ENCODE measurements at regions of chr12 and their contacts with region 1.

Region 1: DNA sequence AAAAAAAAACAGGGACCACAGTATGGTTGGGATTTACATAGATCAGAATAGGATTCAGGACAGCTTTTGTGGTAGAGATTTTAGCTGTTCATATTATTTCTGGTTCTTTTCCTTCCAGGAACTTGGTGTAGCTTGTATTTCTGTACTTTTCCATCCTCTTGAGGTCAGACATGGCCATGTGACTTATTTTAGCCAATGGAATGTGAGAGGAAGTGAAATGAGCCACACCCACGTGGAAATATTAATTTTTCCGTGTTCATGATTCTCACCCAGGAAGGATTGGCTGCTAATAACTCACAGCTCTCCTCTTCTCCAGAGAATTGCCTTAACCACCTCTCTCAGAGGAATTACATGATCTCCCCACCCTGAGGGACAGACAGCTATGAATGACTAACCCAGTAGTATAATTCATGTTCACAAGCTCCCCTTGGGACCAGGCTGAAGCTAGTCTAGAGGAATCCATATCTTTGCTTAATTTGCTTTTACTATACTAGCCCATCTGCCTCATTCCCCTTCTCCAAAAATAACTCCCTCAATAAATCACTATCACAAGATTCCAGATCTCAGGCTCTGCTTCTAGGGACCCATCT is 340.4 kb downstream of the NUAK1 start:
- DNase-seq: no peak
- H3K4me3 Mint-ChIP-seq: no peak overlapping the region
- H3K27ac Mint-ChIP-seq: no peak overlapping the region
- H3K4me1 Mint-ChIP-seq: no peaks in the 10 kb centered on the region
- H3K27me3 Mint-ChIP-seq: no peaks in the 10 kb centered on the region

Region 2: DNA sequence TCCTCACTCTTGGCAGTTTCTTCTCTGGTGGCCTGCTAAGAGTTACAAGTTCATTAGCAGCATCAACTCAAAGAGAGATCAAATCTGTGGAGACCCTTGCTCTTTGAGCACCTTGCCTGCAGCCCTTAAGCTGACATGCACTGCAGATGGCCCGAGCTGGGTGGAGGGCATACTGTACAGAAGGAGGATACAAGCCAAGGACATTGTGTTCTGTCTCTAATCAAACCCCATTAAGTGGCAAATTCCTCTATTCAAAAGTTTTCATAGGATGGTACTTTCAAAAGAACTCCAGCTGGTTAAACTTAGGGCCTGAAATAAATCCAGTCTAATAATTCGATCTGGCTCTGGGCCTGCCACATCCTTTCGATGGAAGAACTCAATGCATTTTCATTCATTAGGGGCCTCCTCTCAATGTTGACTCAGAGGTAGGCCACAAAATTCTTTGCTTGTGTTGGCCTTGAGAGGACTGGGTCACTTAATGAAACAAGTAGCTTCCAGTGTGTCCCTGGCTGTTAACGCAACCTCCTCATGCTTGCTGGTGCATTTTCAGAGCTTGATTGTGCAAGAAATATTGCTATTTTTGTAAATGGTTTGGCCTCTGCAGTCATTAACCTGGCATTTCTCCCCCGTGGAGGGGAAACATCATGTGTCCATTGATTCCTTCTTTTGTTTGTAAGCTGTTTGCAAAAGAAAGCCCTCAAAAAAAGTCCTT is 22.2 kb after region 1 on chr12:
- intact Hi-C with region 1: no loop called
- DNase-seq: no peak
- H3K4me3 Mint-ChIP-seq: no peak overlapping the region
- H3K27ac Mint-ChIP-seq: no peak overlapping the region
- H3K4me1 Mint-ChIP-seq: no peaks in the 10 kb centered on the region
- H3K27me3 Mint-ChIP-seq: no peaks in the 10 kb centered on the region

Region 3: GRCh38 chr12:105850103-105850968 is 52.0 kb after region 1 on chr12:
- intact Hi-C with region 1: loop called (anchors 2 kb)
- DNase-seq: no peak
- H3K4me3 Mint-ChIP-seq: no peak overlapping the region
- H3K27ac Mint-ChIP-seq: no peak overlapping the region
- H3K4me1 Mint-ChIP-seq: no peaks in the 10 kb centered on the region
- H3K27me3 Mint-ChIP-seq: no peaks in the 10 kb centered on the region